ENCODE measurements at regions of chr2 and their contacts with region 1.

Region 1: GRCh38 chr2:9555297-9556141 is at the start of gene ADAM17:
- DNase-seq: peak; percentile 89
- H3K4me3 Mint-ChIP-seq: peak within 1 kb of the TSS; percentile 99
- H3K27ac Mint-ChIP-seq: peak within 1 kb of the TSS; percentile 98
- H3K4me1 Mint-ChIP-seq: peaks cover 59% of the 10 kb centered on the region
- H3K27me3 Mint-ChIP-seq: no peaks in the 10 kb centered on the region
- total RNA-seq, gene ADAM17: 30.4 and 31.6 TPM in 2 replicates

Region 2: DNA sequence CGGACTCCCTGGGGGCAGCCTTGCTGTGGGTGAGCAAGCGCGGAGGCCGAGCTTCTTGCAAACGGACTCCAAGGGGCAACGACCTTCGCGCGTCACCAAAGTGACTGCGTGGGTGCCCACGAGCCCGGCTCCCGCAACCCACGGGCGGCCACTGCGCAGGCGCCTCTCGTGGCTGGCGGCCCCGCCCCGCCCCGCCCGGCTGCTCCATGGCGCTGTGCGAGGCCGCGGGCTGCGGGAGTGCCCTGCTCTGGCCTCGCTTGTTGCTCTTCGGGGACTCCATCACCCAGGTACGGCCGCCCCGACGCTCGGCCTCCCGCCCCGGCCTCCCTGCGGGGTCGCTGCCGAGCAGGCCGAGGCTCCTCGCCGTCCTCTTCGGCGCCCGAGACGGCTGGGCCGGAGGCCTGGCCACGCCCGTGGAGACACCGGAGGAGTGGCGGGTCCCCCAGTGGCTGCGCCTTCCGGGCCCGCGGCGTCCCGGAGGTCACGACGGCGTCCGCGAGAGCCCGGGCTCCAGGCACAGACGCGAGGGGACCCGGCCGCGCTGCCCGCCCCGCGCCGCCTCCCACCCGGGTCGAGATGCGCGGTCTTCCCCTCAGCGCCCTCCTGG is 81.1 kb before region 1 on chr2 and contains the start of gene IAH1:
- intact Hi-C with region 1: loop called (anchors 1 kb)
- DNase-seq: peak; percentile 70
- H3K4me3 Mint-ChIP-seq: peak within 1 kb of the TSS; percentile 84
- H3K27ac Mint-ChIP-seq: peak within 1 kb of the TSS; percentile 84
- H3K4me1 Mint-ChIP-seq: peaks cover 48% of the 10 kb centered on the region
- H3K27me3 Mint-ChIP-seq: no peaks in the 10 kb centered on the region
- total RNA-seq, gene IAH1: 78.6 and 89.3 TPM in 2 replicates

Region 3: DNA sequence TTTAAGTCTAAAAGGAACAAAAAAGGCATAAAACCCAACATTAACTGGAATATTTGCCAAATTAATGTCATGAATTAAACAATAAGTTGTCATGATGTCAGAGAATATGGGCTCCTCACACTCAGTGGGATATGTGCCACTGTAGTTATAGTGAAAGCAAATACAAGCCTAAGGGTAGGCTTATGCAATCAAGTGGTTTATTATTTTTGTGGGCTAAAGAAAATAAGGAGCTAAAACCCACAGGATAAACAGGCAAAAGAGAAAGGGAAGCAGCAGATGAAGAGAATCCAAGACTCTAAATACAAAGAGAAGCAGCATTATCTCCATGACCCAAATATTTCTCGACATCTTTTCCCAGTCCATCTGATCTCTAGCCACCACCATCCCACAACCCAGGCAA is 57.8 kb after region 1 on chr2:
- intact Hi-C with region 1: loop called (anchors 1 kb)
- DNase-seq: no peak
- H3K4me3 Mint-ChIP-seq: no peak overlapping the region
- H3K27ac Mint-ChIP-seq: no peak overlapping the region
- H3K4me1 Mint-ChIP-seq: peaks cover 92% of the 10 kb centered on the region
- H3K27me3 Mint-ChIP-seq: no peaks in the 10 kb centered on the region

Region 4: DNA sequence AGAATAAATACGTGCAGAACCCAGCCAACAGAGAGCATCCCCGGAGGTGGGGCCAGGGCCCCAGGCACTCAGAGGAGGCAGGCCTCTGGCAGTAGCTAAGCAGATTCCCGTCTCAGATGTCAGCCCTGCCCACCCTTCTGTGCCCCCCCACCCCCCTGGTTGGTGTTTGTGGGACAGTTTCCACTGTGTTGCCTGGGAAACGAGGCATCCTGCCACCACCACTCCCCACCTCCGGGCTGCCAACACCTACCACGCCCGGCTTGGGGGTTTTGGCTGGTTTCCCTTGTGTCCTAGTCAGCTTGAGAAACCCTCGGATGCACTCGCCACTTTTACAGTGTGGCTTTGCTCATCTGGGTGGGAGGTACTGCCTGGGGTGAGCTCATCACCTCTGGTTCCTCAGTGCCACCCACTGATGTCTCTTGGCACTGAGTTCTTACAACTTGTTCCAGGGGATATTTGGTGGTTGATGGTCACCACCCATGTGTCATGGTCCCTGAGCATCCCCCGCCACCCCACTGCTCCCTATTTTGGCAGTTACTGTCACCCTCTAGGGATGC is 147.6 kb after region 1 on chr2:
- intact Hi-C with region 1: loop called (anchors 1 kb)
- DNase-seq: peak; percentile 79
- H3K4me3 Mint-ChIP-seq: no peak overlapping the region
- H3K27ac Mint-ChIP-seq: peak overlapping the region; percentile 74
- H3K4me1 Mint-ChIP-seq: peaks cover 48% of the 10 kb centered on the region
- H3K27me3 Mint-ChIP-seq: no peaks in the 10 kb centered on the region

Region 5: GRCh38 chr2:9843229-9844035 is 287.9 kb after region 1 on chr2 and contains the start of gene TAF1B:
- intact Hi-C with region 1: loop called (anchors 1 kb)
- DNase-seq: peak; percentile 87
- H3K4me3 Mint-ChIP-seq: peak within 1 kb of the TSS; percentile 91
- H3K27ac Mint-ChIP-seq: peak within 1 kb of the TSS; percentile 93
- H3K4me1 Mint-ChIP-seq: peaks cover 46% of the 10 kb centered on the region
- H3K27me3 Mint-ChIP-seq: no peaks in the 10 kb centered on the region
- total RNA-seq, gene TAF1B: 23.3 and 25.1 TPM in 2 replicates

Region 6: DNA sequence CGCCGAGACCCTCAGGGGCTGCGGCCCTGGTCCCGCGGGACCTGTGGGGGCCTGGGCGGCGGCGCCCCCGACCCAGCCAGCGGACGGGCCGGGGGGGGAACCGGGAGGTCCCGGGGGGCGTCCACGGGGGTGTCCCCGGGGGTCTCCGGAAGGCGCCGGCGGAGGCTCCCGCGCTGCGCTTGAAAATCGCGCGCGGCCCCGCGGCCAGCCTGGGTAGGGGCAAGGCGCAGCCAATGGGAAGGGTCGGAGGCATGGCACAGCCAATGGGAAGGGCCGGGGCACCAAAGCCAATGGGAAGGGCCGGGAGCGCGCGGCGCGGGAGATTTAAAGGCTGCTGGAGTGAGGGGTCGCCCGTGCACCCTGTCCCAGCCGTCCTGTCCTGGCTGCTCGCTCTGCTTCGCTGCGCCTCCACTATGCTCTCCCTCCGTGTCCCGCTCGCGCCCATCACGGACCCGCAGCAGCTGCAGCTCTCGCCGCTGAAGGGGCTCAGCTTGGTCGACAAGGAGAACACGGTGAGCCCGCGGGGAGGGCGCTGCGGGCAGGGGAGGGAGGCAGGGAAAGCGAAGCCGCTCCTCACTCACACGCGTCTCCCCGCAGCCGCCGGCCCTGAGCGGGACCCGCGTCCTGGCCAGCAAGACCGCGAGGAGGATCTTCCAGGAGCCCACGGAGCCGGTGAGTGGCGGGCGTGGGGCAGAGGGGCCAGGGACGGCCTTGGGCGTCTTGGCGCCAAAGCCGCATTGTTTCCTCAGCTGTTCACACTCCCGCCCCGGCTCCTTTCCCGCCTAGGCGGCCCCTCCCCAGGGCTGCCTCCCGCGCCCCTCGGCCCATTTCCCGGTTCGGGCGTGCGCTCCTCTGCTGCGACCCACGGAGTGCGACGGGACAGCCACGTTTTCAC is 567.1 kb after region 1 on chr2 and contains the start of gene RRM2:
- intact Hi-C with region 1: loop called (anchors 1 kb)
- DNase-seq: peak; percentile 92
- H3K4me3 Mint-ChIP-seq: peak within 1 kb of the TSS; percentile 99
- H3K27ac Mint-ChIP-seq: peak within 1 kb of the TSS; percentile 100
- H3K4me1 Mint-ChIP-seq: peaks cover 64% of the 10 kb centered on the region
- H3K27me3 Mint-ChIP-seq: no peaks in the 10 kb centered on the region
- total RNA-seq, gene RRM2: 328 and 351 TPM in 2 replicates